OCI-LY7 (cell line): ENCODE measurements at regions of chr10 and their contacts with region 1.

Region 1: GRCh38 chr10:14911801-14912200 is 33.1 kb downstream of the SUV39H2 start:
- DNase-seq: no peak
- H3K4me3 ChIP-seq: no peak overlapping the region
- H3K27ac ChIP-seq: no peak overlapping the region
- H3K4me1 ChIP-seq: no peaks in the 10 kb centered on the region
- CTCF ChIP-seq: no peak

Region 2: DNA sequence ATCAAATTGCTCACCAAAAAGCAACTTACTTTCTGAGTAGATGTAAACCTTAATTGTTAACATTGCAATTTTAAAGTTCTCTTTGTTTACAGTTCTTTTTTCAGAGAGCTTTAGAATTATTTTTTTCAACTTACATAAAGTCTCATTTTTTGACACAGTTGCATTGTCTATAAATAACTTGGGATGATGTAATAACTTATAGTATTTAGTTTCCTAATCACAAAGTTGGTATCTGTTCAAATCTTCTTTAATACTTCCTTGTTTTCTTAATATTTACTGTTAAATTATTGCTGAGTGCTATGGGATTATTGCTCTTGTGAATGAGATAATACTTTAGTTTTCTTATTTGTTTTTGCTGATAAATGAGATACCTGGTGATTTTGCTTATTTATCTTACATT is 52.0 kb before region 1 on chr10:
- CTCF ChIA-PET with region 1: no interaction called
- POLR2A ChIA-PET with region 1: no interaction called
- intact Hi-C with region 1: loop called (anchors 5 kb)
- DNase-seq: no peak
- H3K4me3 ChIP-seq: no peak overlapping the region
- H3K27ac ChIP-seq: no peak overlapping the region
- H3K4me1 ChIP-seq: peaks cover 22% of the 10 kb centered on the region
- CTCF ChIP-seq: no peak